CD14-positive monocyte (primary cell): ENCODE measurements at regions of chr3 and their contacts with region 1.

Region 1: GRCh38 chr3:150721285-150722130 is 17.8 kb upstream of the ERICH6 start:
- DNase-seq: peak; percentile 53 to 60 (median 57)
- H3K4me3 ChIP-seq: no peak overlapping the region
- H3K4me3 Mint-ChIP-seq: no peak overlapping the region
- H3K27ac ChIP-seq: no peak overlapping the region
- H3K27ac Mint-ChIP-seq: no peak overlapping the region
- H3K4me1 ChIP-seq: peaks cover 0 to 3% of the 10 kb centered on the region in 2 donors
- H3K4me1 Mint-ChIP-seq: peaks cover 2% of the 10 kb centered on the region
- H3K27me3 ChIP-seq: no peaks in the 10 kb centered on the region
- H3K27me3 Mint-ChIP-seq: peaks cover 1 to 3% (median 2%) of the 10 kb centered on the region in 3 donors
- CTCF ChIP-seq: peak; percentile 89

Region 2: DNA sequence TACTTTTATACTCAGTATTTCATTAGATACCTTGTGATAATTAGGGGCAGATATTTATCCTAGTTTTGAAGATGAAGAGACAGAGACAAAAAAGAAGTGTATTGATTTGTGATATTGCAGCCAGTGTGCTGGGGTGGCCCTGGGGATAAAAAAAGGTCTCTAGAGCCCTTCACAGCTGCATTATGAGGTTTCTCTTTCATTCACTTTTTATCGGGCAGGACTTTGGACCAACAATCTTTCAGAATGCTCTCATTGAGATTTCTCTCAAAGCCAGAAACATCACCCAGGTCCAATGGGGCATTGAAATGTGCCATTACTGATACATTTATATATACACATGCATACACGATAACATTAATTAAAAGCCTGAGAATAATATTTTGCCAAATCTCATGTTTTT is 138.9 kb before region 1 on chr3:
- intact Hi-C with region 1: no loop called
- DNase-seq: no peak
- H3K4me3 ChIP-seq: no peak overlapping the region
- H3K4me3 Mint-ChIP-seq: no peak overlapping the region
- H3K27ac ChIP-seq: no peak overlapping the region
- H3K27ac Mint-ChIP-seq: no peak overlapping the region
- H3K4me1 ChIP-seq: no peaks in the 10 kb centered on the region
- H3K4me1 Mint-ChIP-seq: no peaks in the 10 kb centered on the region
- H3K27me3 ChIP-seq: no peaks in the 10 kb centered on the region
- H3K27me3 Mint-ChIP-seq: no peaks in the 10 kb centered on the region
- CTCF ChIP-seq: no peak

Region 3: DNA sequence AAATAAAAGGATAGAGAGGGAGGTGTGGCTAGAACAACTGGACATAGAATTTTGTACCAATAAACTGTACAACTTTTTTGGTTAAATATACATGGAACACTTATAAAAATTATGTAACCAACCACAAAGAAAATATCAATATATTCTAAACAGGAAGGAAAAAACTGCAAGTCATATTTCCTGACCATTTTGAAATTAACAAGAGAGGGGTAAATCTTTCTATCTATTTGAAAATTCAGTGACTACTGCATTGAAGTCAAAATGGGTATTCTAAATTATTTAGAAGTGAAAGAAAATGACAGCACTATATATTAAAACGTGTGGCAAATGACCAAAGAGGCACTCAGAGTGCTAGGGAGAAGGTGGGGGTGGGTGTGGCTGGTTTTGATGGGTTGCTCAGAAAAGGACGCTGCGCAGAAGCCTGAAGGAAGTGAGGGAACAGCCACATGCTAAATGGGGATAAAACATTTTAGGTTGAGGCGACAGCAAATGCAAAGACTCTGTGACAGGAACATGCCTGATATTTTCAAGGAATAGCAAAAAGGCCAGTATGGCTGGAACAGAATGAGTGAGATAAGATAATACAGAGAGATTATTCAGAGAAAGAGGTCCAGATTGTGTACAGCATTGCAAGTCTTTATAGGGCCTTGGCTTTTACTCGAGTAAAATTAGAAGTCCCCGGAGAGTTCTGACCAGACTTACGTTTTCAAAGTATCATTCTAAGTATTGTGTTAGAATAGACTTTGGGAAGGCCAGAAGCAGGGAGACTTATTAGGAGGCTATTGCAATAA is 58.9 kb before region 1 on chr3:
- intact Hi-C with region 1: no loop called
- DNase-seq: peak; percentile 5 to 10 (median 10)
- H3K4me3 ChIP-seq: peak overlapping the region in 1 of 3 experiments; percentile 38
- H3K4me3 Mint-ChIP-seq: peak overlapping the region in 1 of 2 donors; percentile 70
- H3K27ac ChIP-seq: peak overlapping the region in 1 of 2 donors; percentile 49
- H3K27ac Mint-ChIP-seq: peak overlapping the region; percentile 39 to 84 (median 61)
- H3K4me1 ChIP-seq: peaks cover 22 to 29% of the 10 kb centered on the region in 2 donors
- H3K4me1 Mint-ChIP-seq: peaks cover 30% of the 10 kb centered on the region
- H3K27me3 ChIP-seq: no peaks in the 10 kb centered on the region
- H3K27me3 Mint-ChIP-seq: peaks cover 0 to 8% (median 2%) of the 10 kb centered on the region in 3 donors
- CTCF ChIP-seq: no peak

Region 4: DNA sequence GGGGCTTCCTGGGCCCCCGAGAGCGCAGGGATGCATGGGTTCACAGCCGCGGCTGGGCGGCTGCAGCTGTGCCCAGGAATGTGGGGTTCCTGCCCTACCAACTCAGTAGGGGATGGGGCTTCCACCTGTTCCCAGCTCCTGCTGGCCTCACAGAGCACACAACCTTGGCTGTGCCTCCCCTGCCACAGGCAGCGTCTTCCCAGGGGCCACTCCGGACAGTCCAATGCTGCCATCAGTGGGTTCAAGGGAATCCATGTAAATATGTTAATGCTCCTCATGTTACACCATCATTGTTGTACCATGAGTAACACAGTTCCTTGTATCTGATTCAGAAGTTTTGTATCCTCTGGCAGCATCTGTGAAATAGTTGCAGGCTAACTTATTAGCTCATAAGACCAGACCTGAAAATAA is 53.6 kb after region 1 on chr3:
- intact Hi-C with region 1: loop called in 1 of 2 experiments (anchors 10 kb)
- DNase-seq: no peak
- H3K4me3 ChIP-seq: no peak overlapping the region
- H3K4me3 Mint-ChIP-seq: no peak overlapping the region
- H3K27ac ChIP-seq: no peak overlapping the region
- H3K27ac Mint-ChIP-seq: no peak overlapping the region
- H3K4me1 ChIP-seq: no peaks in the 10 kb centered on the region
- H3K4me1 Mint-ChIP-seq: no peaks in the 10 kb centered on the region
- H3K27me3 ChIP-seq: no peaks in the 10 kb centered on the region
- H3K27me3 Mint-ChIP-seq: peaks cover 0 to 2% (median 2%) of the 10 kb centered on the region in 3 donors
- CTCF ChIP-seq: no peak

Region 5: GRCh38 chr3:150806185-150806835 is 84.8 kb after region 1 on chr3:
- intact Hi-C with region 1: no loop called
- DNase-seq: no peak
- H3K4me3 ChIP-seq: no peak overlapping the region
- H3K4me3 Mint-ChIP-seq: no peak overlapping the region
- H3K27ac ChIP-seq: no peak overlapping the region
- H3K27ac Mint-ChIP-seq: no peak overlapping the region
- H3K4me1 ChIP-seq: no peaks in the 10 kb centered on the region
- H3K4me1 Mint-ChIP-seq: no peaks in the 10 kb centered on the region
- H3K27me3 ChIP-seq: no peaks in the 10 kb centered on the region
- H3K27me3 Mint-ChIP-seq: peaks cover 1 to 2% (median 1%) of the 10 kb centered on the region in 3 donors
- CTCF ChIP-seq: no peak

Region 6: DNA sequence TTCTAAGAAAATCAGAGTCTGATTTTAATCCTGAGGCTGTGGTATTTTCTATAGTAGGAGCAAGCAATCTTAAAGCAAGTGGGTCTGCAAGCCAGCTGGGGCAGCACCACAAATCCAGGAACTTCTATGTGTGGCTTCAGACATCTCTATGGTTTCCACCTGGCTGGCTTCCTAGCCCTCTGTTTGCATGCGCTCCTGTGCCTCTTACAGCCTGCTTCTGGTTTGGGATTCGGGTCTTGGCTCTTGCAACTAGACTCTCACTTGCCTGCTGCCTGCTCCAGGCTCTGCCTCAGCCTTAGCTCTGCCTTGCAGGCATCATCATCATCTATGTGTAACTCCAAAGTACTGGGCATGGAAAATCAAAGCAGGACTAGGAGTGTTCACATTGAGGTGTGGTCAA is 140.3 kb after region 1 on chr3:
- intact Hi-C with region 1: loop called (anchors 2 to 5 kb)
- DNase-seq: no peak
- H3K4me3 ChIP-seq: no peak overlapping the region
- H3K4me3 Mint-ChIP-seq: no peak overlapping the region
- H3K27ac ChIP-seq: no peak overlapping the region
- H3K27ac Mint-ChIP-seq: peak overlapping the region in 1 of 7 donors; percentile 70
- H3K4me1 ChIP-seq: no peaks in the 10 kb centered on the region
- H3K4me1 Mint-ChIP-seq: peaks cover 2% of the 10 kb centered on the region
- H3K27me3 ChIP-seq: no peaks in the 10 kb centered on the region
- H3K27me3 Mint-ChIP-seq: peaks cover 0 to 11% (median 8%) of the 10 kb centered on the region in 3 donors
- CTCF ChIP-seq: no peak

Region 7: GRCh38 chr3:151146071-151146730 is 424.7 kb after region 1 on chr3:
- intact Hi-C with region 1: loop called in 1 of 2 experiments (anchors 10 kb)
- DNase-seq: peak; percentile 67 to 83 (median 78)
- H3K4me3 ChIP-seq: peak overlapping the region in 1 of 3 experiments; percentile 43
- H3K4me3 Mint-ChIP-seq: no peak overlapping the region
- H3K27ac ChIP-seq: peak overlapping the region in 1 of 2 donors; percentile 47
- H3K27ac Mint-ChIP-seq: peak overlapping the region in 1 of 7 donors; percentile 17
- H3K4me1 ChIP-seq: peaks cover 12 to 14% of the 10 kb centered on the region in 2 donors
- H3K4me1 Mint-ChIP-seq: no peaks in the 10 kb centered on the region
- H3K27me3 ChIP-seq: no peaks in the 10 kb centered on the region
- H3K27me3 Mint-ChIP-seq: peaks cover 0 to 4% (median 4%) of the 10 kb centered on the region in 3 donors
- CTCF ChIP-seq: peak; percentile 90